Activated CD4-positive, alpha-beta T cell treated with anti-CD3 and anti-CD28 coated beads, Interleukin-2, amount 10 ng/mL, durations not matched to agents 24 days and 14 days (primary cell): ENCODE measurements at regions of chr4 and their contacts with region 1.

Region 1: DNA sequence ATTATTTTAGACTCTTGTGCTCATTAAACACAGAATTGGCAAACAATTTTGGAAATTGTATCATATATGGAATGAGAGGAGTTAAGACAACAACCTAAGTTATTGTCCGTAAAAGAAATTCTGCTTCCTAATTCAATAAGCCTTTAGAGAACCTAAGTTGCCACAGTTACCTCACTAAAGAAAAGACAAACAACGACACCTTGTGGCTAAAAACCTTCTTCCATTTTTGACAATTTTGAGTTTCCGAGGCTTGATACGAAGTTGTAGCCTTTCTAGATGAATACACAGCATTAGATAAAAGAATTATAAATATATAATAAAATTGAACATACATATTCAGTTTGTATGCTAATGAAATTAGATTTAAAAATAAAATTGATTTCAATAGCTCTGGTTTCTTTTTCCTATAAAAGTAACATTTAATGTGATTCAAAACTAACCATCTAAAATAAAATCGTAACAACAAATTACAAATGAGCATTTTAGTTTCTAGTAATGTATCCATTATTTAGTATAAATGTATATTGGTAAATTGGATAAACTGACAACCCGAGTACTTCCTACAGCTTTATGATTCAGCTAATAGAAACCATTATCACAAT is 275.1 kb downstream of the GPM6A start:
- DNase-seq: no peak
- H3K4me3 Mint-ChIP-seq: no peak overlapping the region
- H3K27ac Mint-ChIP-seq: no peak overlapping the region
- H3K4me1 Mint-ChIP-seq: no peaks in the 10 kb centered on the region
- H3K27me3 Mint-ChIP-seq: no peaks in the 10 kb centered on the region

Region 2: DNA sequence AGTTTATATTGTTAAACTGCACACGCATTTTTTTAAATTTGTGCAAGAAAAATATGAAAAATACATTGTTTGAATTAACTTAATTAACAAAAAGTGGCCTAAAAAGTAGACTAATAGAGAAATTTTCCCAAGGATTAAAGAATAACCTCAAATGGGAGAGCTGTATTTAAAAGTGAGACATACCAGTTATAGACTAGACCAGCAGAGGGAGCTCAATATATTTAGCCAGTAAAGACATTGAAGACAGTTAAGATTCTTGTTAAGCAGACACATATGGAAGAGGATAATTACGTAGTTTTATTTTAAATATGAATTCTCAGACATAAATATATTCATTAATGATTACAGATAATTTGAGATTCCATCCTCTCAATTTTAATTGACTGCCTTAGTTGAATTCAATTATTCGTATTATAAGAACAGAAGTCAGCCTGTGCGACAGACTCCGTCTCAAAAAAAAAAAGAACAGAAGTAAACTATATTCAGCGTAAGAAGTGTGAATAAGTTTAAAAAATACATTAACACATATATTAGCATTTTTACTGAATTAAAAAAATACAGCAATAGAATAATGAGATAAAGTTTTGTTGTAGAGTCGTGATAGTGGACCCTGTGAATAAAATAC is 772.7 kb before region 1 on chr4:
- intact Hi-C with region 1: loop called (anchors 5 kb)
- DNase-seq: no peak
- H3K4me3 Mint-ChIP-seq: no peak overlapping the region
- H3K27ac Mint-ChIP-seq: no peak overlapping the region
- H3K4me1 Mint-ChIP-seq: no peaks in the 10 kb centered on the region
- H3K27me3 Mint-ChIP-seq: no peaks in the 10 kb centered on the region

Region 3: GRCh38 chr4:175509320-175509719 is 27.6 kb before region 1 on chr4:
- intact Hi-C with region 1: no loop called
- DNase-seq: no peak
- H3K4me3 Mint-ChIP-seq: no peak overlapping the region
- H3K27ac Mint-ChIP-seq: no peak overlapping the region
- H3K4me1 Mint-ChIP-seq: no peaks in the 10 kb centered on the region
- H3K27me3 Mint-ChIP-seq: no peaks in the 10 kb centered on the region